ENCODE measurements at regions of chr5 and their contacts with region 1.

Region 1: DNA sequence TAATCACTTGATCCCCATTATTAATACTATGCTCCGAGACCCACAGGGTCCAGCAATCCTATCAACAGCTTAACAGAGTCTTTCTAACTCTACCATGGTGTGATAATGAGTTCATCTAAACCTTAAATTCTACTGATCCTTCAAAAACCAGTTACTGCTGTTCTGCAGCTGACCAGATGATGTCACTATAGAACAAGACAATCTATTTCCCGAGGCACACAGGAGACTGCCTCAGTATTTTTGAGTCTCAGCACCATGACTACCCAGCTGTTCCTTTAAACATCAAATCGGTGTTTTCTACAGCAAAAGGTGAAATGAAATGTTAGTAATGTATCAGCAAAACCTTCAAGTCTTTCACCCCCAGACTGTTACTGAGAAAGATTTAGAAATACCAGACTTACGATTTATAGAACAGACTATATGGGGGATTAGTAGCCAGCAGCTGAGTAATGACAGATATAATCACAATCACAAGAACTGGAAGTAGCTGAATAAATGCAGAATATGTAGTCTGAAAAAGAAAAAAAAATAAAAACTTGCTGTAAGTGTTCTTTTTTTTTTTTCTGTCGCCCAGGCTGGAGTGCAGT is 16.9 kb downstream of the DNAJC18 start:
- DNase-seq: no peak
- ATAC-seq: peak; percentile 99
- H3K4me3 Mint-ChIP-seq: no peak overlapping the region
- H3K27ac Mint-ChIP-seq: no peak overlapping the region
- H3K4me1 Mint-ChIP-seq: peaks cover 5% of the 10 kb centered on the region
- H3K27me3 Mint-ChIP-seq: no peaks in the 10 kb centered on the region
- CTCF ChIP-seq: no peak

Region 2: DNA sequence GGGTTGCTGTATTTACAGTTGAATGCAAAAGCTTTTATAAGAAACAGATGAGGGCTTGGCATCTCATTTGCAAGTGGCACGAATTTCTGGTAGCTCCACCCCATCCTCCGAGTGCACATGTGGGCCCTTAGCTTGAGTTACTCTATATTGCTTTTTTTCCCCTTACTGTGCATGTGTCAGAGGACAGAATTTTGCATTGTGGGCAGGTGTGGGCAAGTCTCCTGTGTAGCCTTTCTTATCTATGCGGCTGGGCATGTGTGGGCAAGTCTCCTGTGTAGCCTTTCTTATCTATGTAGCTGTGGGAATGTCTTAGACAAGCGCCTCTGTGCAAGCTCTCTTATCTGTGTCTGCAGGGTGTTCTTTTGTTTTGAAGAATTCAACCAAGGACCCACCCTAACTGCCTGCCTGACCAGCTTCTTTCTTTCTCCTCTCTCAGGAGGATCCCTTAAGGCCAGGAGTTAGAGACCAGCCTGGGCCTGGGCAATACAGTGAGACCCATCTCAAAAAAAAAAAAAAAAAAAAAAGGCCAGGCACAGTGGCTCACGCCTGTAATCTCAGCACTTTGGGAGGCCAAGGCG is 190.2 kb before region 1 on chr5:
- CTCF ChIA-PET with region 1: no interaction called
- POLR2A ChIA-PET with region 1: no interaction called
- intact Hi-C with region 1: no loop called
- DNase-seq: no peak
- ATAC-seq: no peak
- H3K4me3 Mint-ChIP-seq: no peak overlapping the region
- H3K27ac Mint-ChIP-seq: no peak overlapping the region
- H3K4me1 Mint-ChIP-seq: no peaks in the 10 kb centered on the region
- H3K27me3 Mint-ChIP-seq: no peaks in the 10 kb centered on the region
- CTCF ChIP-seq: no peak

Region 3: DNA sequence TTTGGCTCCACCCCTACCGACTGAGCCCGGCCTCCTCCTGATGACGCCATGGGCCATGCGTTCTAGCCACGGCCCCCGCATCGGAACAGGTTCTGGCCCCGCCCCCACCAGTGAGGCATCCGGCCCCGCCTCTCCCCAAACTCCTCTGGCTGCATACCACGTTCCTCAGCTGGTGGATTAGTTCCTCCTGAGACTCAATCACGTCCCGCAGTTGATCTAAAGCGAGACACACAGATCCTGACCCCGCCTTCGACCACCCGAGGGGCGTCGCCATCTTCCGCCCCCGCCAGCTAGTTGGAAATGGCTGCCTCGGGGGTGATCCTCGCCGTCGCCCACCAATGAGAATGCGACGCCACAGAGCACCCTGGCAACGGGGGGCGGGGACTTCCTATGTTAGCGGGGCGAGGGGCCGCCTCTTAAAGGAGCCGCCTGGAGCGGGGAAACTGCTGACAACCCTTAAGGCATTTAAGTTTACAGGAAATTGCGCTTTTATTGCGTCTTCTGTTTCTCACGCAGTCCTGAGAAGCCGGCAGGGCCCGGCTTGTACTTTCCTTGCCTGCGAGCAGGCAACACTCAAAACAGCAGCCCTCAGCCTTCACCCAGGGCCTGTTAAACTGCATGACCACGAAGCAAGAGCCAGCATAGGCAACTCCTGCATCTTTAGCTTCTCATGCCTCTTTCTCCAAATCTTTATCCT is 18.5 kb before region 1 on chr5 and contains the start of gene SPATA24:
- CTCF ChIA-PET with region 1: interaction called, 4 read pairs
- POLR2A ChIA-PET with region 1: interaction called, 6 read pairs
- intact Hi-C with region 1: loop called (anchors 1 kb)
- DNase-seq: peak; percentile 93
- ATAC-seq: peak; percentile 84
- H3K4me3 Mint-ChIP-seq: peak within 1 kb of the TSS; percentile 90
- H3K27ac Mint-ChIP-seq: peak within 1 kb of the TSS; percentile 96
- H3K4me1 Mint-ChIP-seq: peaks cover 53% of the 10 kb centered on the region
- H3K27me3 Mint-ChIP-seq: no peaks in the 10 kb centered on the region
- CTCF ChIP-seq: no peak
- total RNA-seq, gene SPATA24: 6.4 and 9.3 TPM in 2 replicates

Region 4: GRCh38 chr5:139446956-139447779 is 24.8 kb after region 1 on chr5:
- CTCF ChIA-PET with region 1: no interaction called
- POLR2A ChIA-PET with region 1: no interaction called
- intact Hi-C with region 1: no loop called
- DNase-seq: no peak
- ATAC-seq: no peak
- H3K4me3 Mint-ChIP-seq: no peak overlapping the region
- H3K27ac Mint-ChIP-seq: no peak overlapping the region
- H3K4me1 Mint-ChIP-seq: no peaks in the 10 kb centered on the region
- H3K27me3 Mint-ChIP-seq: no peaks in the 10 kb centered on the region
- CTCF ChIP-seq: no peak

Region 5: GRCh38 chr5:139574641-139575312 is 152.4 kb after region 1 on chr5:
- CTCF ChIA-PET with region 1: interaction called, 5 read pairs
- POLR2A ChIA-PET with region 1: no interaction called
- intact Hi-C with region 1: loop called (anchors 2 kb)
- DNase-seq: no peak
- ATAC-seq: peak; percentile 70
- H3K4me3 Mint-ChIP-seq: no peak overlapping the region
- H3K27ac Mint-ChIP-seq: peak overlapping the region; percentile 42
- H3K4me1 Mint-ChIP-seq: peaks cover 81% of the 10 kb centered on the region
- H3K27me3 Mint-ChIP-seq: no peaks in the 10 kb centered on the region
- CTCF ChIP-seq: peak; percentile 28

Region 6: GRCh38 chr5:139690064-139690802 is 267.8 kb after region 1 on chr5:
- CTCF ChIA-PET with region 1: interaction called, 15 read pairs
- POLR2A ChIA-PET with region 1: no interaction called
- intact Hi-C with region 1: loop called (anchors 1 kb)
- DNase-seq: no peak
- ATAC-seq: peak; percentile 56
- H3K4me3 Mint-ChIP-seq: no peak overlapping the region
- H3K27ac Mint-ChIP-seq: peak overlapping the region; percentile 67
- H3K4me1 Mint-ChIP-seq: peaks cover 53% of the 10 kb centered on the region
- H3K27me3 Mint-ChIP-seq: no peaks in the 10 kb centered on the region
- CTCF ChIP-seq: peak; percentile 19

Region 7: DNA sequence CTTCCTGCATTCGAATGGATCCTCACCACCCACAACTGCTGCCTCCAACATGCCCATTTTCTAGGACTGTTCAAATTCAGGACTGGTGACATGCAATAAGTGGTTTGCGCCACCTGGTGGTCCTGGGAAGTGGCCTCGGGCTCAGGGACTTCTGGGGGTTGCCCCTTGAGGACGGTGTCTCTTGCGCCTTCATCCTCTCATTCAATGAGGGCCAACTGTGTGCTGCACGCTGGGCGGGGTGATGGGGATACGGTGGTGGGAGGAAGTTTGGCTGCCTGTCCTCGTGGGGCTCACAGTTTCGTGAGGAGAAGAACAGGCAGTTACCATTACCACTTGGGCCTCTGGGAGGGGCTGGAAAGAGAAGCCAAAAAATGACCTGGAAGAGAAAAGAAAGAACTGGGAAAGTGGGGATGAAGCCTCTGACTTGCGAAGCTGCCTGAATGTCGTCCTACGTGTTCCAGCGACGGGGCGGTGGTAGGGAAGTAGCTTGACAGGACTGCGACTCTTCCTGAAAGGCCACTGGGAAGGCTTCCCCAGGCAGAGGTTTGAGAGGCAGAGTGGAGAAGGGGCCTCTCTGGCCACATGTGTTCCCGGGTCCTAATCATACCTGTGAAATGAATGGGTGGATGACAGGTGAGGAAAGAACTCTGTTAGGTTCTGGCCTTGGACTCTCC is 422.2 kb after region 1 on chr5:
- CTCF ChIA-PET with region 1: interaction called, 4 read pairs
- POLR2A ChIA-PET with region 1: no interaction called
- intact Hi-C with region 1: loop called (anchors 1 kb)
- DNase-seq: peak; percentile 57
- ATAC-seq: peak; percentile 40
- H3K4me3 Mint-ChIP-seq: peak overlapping the region; percentile 5
- H3K27ac Mint-ChIP-seq: no peak overlapping the region
- H3K4me1 Mint-ChIP-seq: peaks cover 16% of the 10 kb centered on the region
- H3K27me3 Mint-ChIP-seq: peaks cover 13% of the 10 kb centered on the region
- CTCF ChIP-seq: peak; percentile 61

Region 8: GRCh38 chr5:139968547-139969261 is 546.3 kb after region 1 on chr5:
- CTCF ChIA-PET with region 1: interaction called, 10 read pairs
- POLR2A ChIA-PET with region 1: no interaction called
- intact Hi-C with region 1: no loop called
- DNase-seq: peak; percentile 83
- ATAC-seq: peak; percentile 100
- H3K4me3 Mint-ChIP-seq: no peak overlapping the region
- H3K27ac Mint-ChIP-seq: no peak overlapping the region
- H3K4me1 Mint-ChIP-seq: no peaks in the 10 kb centered on the region
- H3K27me3 Mint-ChIP-seq: peaks cover 32% of the 10 kb centered on the region
- CTCF ChIP-seq: peak; percentile 47

Measured in activated B cell treated with CpG ODN at 0.5 μM for 24 hours (primary cell).